ENCODE measurements at regions of chr2 and their contacts with region 1.

Region 1: GRCh38 chr2:24617424-24617823 is 126.4 kb downstream of the NCOA1 start:
- DNase-seq: no peak
- H3K4me3 ChIP-seq: no peak overlapping the region
- CTCF ChIP-seq: no peak

Region 2: GRCh38 chr2:24065341-24065740 is 552.1 kb before region 1 on chr2:
- in situ Hi-C with region 1: no loop called
- DNase-seq: no peak
- H3K4me3 ChIP-seq: no peak overlapping the region
- CTCF ChIP-seq: no peak

Region 3: GRCh38 chr2:24543252-24543651 is 74.2 kb before region 1 on chr2:
- in situ Hi-C with region 1: no loop called
- DNase-seq: no peak
- H3K4me3 ChIP-seq: no peak overlapping the region
- CTCF ChIP-seq: no peak

Region 4: DNA sequence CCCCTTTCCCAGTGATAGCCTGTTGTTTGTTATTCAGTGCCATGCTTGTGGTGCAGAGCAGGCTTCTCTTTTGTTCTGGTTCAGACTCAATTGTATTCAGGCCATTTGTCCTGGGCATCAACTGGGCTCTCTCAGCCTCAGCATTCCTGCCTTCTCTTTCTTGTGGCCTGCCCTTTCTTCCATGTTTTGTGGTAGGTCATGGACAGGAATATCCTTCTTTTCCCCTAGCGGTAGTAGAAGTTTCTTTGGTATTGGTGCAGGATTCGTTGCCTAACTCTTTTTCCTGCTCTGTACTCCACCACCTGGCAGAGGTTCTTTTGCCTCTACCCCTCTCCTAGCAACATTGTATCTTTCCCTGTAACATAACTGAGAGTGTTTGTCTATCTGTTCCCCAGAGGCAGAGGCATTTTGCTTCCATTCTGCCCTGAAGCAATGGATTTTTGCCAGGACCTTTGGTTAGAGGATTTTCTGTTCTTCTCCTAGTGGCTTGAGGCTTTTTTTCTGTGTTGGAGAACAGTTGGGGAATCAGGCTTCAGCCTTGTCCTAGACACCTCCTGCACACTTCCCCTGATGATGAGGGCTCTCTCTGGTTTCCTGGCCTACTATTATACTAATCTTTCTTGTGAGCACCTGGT is 57.8 kb before region 1 on chr2:
- in situ Hi-C with region 1: loop called (anchors 5 kb)
- DNase-seq: peak; percentile 44
- H3K4me3 ChIP-seq: no peak overlapping the region
- CTCF ChIP-seq: no peak

Region 5: GRCh38 chr2:25912851-25913695 is 1295.6 kb after region 1 on chr2:
- in situ Hi-C with region 1: no loop called
- DNase-seq: no peak
- H3K4me3 ChIP-seq: no peak overlapping the region
- CTCF ChIP-seq: no peak

Measured in astrocyte of the cerebellum (primary cell).